Colonic mucosa (tissue), 4 donors: ENCODE measurements at regions of chr17 and their contacts with region 1.

Region 1: DNA sequence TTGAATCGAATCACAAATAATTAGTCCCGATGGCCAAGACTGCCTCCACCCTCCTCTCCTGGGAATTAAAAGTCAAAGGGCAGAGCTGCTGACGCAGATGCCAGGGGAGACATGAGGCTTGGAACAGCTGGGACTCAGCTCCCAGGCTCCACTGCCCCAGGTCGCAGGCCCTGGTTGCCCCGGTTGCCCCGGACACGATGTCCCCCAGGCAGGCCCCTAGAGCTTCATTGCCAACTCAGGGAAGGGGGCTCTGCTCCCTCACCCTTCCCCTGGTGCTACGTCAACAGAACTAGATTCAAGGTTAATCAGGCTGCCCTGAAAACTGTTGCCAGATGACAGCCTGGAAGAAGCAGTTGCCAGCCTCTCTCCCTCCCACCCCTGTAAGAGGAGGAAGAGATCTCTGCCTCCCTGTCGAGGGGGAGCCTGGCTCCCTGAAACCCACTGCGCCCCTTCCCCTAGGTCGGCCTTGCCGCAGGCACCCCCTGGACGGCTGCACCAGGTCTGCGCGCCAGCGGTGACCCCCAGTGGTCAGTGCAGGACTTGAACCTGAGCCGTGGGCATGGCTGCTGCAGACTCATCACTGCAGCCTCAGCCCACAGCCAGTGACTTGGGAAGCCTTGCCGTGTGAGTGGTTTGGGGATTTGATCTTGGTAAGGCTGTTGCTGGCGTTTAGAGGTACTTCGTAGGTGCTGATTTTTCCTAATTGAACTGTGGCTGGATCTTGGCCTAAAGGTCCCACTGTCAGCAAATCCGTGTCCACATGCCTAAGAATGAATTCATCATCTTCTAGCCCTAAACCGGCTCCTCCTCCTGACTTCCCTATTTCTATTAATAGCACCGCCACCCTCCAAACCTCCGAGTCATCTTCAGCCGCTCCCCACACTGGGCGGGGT is 84.1 kb upstream of the TOB1 start:
- DNase-seq: peak; percentile 86
- H3K4me3 ChIP-seq: no peak overlapping the region
- H3K27ac ChIP-seq: peak overlapping the region; percentile 84
- H3K4me1 ChIP-seq: peaks cover 26% of the 10 kb centered on the region
- H3K27me3 ChIP-seq: no peaks in the 10 kb centered on the region
- CTCF ChIP-seq: peak; percentile 76

Region 2: DNA sequence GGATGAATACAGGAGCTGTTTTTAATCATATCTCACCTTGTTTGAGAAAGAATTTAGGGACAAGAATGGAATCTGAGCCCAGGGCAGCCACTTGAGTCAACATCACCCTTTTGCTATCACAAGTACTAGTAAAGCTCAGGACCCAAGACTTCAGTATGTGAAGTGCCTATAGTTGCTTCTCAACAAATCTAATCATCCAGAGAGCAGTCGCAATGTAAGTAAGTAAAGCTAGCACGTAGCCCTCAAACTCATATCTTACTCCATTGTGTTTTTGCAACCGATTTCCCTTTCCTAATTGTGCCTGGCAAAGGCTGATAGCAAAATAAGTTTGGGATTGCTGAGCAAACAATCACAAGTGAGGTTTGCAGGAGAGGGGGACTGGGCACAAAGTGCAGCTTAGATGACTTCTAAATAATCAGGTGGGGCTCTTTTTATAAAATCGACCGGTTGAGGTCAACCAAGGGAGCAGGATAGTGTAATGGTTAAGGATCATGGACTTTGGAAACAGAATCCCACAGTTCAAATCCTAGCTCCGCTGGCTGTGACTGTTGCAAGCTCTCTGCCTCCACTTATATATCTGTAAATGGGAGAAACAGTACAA is 97.1 kb before region 1 on chr17:
- intact Hi-C with region 1: loop called (anchors 2 kb)
- DNase-seq: no peak
- H3K4me3 ChIP-seq: no peak overlapping the region
- H3K27ac ChIP-seq: peak overlapping the region; percentile 0
- H3K4me1 ChIP-seq: peaks cover 9% of the 10 kb centered on the region
- H3K27me3 ChIP-seq: no peaks in the 10 kb centered on the region
- CTCF ChIP-seq: no peak

Region 3: GRCh38 chr17:50872710-50873424 is 77.4 kb before region 1 on chr17:
- intact Hi-C with region 1: no loop called
- DNase-seq: no peak
- H3K4me3 ChIP-seq: no peak overlapping the region
- H3K27ac ChIP-seq: no peak overlapping the region
- H3K4me1 ChIP-seq: no peaks in the 10 kb centered on the region
- H3K27me3 ChIP-seq: no peaks in the 10 kb centered on the region
- CTCF ChIP-seq: no peak